A673 (cell line): ENCODE measurements at regions of chr1 and their contacts with region 1.

Region 1: DNA sequence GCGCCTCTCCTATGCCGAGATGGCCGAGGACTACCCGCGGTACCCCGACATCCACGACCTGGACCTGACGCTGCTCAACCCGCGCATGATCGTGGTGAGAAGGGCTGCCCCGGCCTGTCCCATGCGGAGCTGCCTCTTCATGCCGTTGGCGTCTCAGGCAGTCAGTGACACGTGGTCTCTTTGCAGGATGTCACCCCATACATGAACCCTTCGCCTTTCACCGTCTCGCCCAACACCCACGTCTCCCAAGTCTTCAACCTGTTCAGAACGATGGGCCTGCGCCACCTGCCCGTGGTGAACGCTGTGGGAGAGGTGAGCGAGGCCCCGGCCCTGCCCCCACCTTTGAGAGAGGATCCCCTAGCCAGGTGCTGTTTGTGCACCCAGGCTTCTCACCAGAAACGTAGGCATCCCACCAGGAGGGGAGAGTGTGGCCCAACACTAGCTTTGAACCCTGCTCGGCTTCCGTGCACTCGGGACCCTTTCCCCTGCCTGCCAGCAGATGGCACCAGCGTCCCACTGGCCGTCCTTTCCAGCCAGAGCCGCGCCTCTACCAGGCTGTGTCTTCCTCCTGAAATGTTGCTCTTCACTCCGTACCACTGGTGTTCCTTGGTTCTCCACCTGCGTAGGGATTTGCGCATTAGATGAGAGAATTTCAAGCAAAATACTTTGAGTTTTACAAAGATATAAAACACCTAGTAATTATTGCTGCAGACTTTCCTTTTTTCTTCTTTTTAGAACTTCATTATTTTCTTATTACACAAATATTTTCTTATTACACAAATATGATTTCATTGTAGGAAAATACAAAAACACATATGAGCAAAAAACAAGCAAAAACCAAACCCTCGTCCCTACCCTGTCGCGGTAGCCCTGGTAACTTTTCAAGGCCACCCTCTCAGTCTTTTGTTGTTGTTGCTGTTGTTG is 9.0 kb downstream of the NPPA start:
- DNase-seq: peak; percentile 73
- H3K4me3 ChIP-seq: no peak overlapping the region
- H3K27ac ChIP-seq: no peak overlapping the region
- H3K4me1 ChIP-seq: peaks cover 9% of the 10 kb centered on the region
- H3K27me3 ChIP-seq: no peaks in the 10 kb centered on the region
- CTCF ChIP-seq: peak; percentile 99

Region 2: DNA sequence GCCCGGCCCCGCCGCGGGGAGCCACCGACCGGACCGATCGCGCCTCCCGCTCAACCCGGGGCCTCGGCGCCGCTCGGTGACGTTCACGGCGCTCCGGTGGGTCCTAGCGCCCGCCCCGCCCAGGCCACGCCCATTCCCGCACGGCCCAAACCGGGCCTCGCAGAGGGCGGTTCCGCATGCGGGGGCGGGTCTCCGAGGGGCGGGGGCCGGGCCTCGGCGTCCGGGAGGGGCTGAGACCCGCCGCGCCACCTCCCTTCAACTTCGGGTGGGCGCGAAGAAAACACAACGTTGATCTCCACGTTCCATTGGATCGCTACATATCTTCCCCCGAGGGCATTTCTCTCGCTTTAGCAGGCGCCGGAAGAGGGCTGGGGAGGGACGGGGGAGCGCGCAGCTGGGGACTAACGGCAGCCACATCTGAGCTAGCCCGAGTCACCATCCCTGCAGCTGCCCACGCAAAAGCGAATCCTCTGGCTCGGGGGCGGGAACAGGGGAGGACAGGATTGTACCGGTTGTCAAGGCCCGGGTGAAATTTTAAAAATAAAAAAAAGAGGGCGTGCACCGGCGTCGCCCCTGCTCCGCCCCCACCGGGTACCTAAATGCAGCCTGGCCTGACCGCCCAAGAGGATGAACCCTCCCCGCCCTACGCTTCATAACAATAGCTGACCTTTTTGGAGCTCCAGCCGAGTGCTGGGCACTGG is 157.4 kb before region 1 on chr1 and contains the start of gene MAD2L2:
- CTCF ChIA-PET with region 1: no interaction called
- POLR2A ChIA-PET with region 1: no interaction called
- intact Hi-C with region 1: no loop called
- DNase-seq: peak; percentile 95
- H3K4me3 ChIP-seq: peak within 1 kb of the TSS; percentile 94
- H3K27ac ChIP-seq: peak within 1 kb of the TSS; percentile 95
- H3K4me1 ChIP-seq: peaks cover 42% of the 10 kb centered on the region
- H3K27me3 ChIP-seq: no peaks in the 10 kb centered on the region
- CTCF ChIP-seq: no peak
- total RNA-seq, gene MAD2L2: 134 and 155 TPM in 2 replicates

Region 3: GRCh38 chr1:11893907-11894251 is 55.3 kb after region 1 on chr1:
- CTCF ChIA-PET with region 1: no interaction called
- POLR2A ChIA-PET with region 1: no interaction called
- intact Hi-C with region 1: loop called (anchors 1 kb)
- DNase-seq: peak; percentile 43
- H3K4me3 ChIP-seq: no peak overlapping the region
- H3K27ac ChIP-seq: no peak overlapping the region
- H3K4me1 ChIP-seq: no peaks in the 10 kb centered on the region
- H3K27me3 ChIP-seq: peaks cover 41% of the 10 kb centered on the region
- CTCF ChIP-seq: peak; percentile 92

Region 4: DNA sequence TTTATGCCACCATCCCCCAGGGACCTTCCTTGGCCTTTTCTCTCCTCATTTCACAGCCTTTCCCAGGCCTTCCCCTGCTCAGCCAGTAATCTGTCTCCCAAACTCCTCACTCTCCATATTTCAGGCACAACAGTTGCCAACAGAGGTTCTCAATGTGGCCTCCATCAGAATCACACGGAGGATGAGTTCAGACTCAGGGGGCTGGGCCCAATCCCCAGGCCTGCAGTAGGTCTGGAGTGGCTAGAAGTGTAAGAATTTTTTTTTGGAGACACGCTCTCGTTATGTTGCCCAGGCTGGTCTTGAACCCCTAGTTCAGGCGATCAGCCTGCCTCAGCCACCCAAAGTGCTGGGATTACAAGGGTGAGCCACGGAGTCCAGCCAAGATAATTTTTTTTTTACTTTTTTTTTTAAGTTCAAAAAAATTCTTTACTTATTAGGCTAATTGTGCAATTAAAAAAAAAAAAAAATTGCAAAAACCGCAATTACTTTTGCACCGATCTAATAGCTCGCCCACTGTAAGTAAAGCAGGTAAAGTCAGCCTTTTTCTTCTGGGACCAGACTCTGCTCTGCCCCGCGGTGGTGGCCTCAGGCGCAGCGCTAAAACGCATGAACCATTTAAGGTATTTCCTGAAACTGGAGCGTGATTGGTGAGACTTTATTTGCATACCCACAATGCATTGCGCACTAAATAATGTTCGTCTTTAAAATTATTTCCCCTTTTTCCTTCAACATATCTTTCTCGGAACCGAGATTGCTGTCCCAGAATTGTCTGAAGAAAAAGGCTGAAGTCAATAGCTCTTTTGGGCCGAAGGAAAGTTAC is 68.9 kb after region 1 on chr1:
- CTCF ChIA-PET with region 1: no interaction called
- POLR2A ChIA-PET with region 1: no interaction called
- intact Hi-C with region 1: loop called (anchors 2 kb)
- DNase-seq: peak; percentile 98
- H3K4me3 ChIP-seq: no peak overlapping the region
- H3K27ac ChIP-seq: peak overlapping the region; percentile 99
- H3K4me1 ChIP-seq: peaks cover 4% of the 10 kb centered on the region
- H3K27me3 ChIP-seq: no peaks in the 10 kb centered on the region
- CTCF ChIP-seq: peak; percentile 98

Region 5: DNA sequence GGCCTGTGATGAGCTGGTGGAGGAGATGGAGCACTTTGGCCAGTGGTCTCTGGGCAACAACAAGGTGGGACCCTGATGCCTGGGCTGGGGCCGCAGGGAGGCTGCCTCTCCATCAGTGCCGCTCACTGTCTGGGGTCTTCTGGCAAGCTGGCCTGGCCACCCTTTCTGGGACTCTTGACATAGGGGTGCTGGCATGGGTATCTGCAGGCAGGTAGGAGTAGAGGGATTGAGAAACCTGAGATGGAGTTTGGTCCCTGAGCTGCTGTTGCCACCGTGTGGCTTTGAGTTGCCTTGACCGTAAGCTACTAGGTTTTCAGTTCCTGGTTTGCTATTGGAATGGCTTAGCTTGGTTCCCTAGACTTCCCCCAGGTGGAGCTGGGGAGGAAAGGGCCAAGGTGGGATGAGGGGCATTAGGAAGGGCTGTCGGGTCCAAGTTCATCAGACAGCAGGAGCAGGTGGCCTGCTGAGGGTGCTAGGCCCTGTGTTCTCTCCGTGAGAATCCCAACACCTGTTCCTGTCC is 128.5 kb after region 1 on chr1:
- CTCF ChIA-PET with region 1: interaction called, 8 read pairs
- POLR2A ChIA-PET with region 1: no interaction called
- intact Hi-C with region 1: loop called (anchors 2 kb)
- DNase-seq: peak; percentile 52
- H3K4me3 ChIP-seq: no peak overlapping the region
- H3K27ac ChIP-seq: no peak overlapping the region
- H3K4me1 ChIP-seq: no peaks in the 10 kb centered on the region
- H3K27me3 ChIP-seq: no peaks in the 10 kb centered on the region
- CTCF ChIP-seq: peak; percentile 42